BJ (cell line): ENCODE measurements at regions of chr3 and their contacts with region 1.

Region 1: DNA sequence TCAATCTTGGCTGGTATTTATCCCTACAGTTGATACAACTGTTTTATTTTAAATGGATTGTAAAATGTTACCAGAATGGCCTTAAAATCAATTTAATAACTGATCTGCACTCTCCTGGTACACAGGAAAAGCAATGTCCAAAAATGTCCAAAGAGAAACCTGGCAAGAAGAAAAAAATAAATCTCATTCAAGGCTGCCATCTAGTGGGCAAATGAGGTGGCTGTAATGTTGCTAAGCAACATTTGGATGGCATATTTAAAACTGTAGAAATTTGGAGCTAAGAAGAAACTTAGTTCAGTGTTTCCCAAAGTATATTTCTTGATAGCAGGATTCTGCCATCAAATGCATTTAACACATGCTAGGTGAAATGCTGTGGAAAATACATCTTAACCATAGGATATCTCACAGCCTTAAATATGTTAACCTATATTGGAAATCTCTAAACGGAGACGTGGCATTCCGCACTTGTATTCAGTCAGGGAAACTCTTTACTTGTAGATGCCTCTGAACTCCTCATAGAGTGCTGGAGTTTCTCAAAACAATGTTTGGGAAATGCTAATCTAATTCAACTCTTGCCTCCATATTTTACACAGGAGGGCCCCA is 216.8 kb downstream of the ERC2 start:
- DNase-seq: no peak
- H3K4me3 ChIP-seq: no peak overlapping the region
- H3K27me3 ChIP-seq: no peaks in the 10 kb centered on the region
- CTCF ChIP-seq: peak; percentile 71

Region 2: GRCh38 chr3:56052188-56052587 is 199.3 kb before region 1 on chr3:
- CTCF ChIA-PET with region 1: interaction called, 10 read pairs
- POLR2A ChIA-PET with region 1: no interaction called
- DNase-seq: no peak
- H3K4me3 ChIP-seq: no peak overlapping the region
- H3K27me3 ChIP-seq: 0 out of 2 replicates have a peak, but pooled peaks cover 2% of the 10 kb centered on the region
- CTCF ChIP-seq: no peak